Activated naive CD4-positive, alpha-beta T cell treated with anti-CD3 and anti-CD28 coated beads for 36 hours (primary cell): ENCODE measurements at regions of chr5 and their contacts with region 1.

Region 1: GRCh38 chr5:56012281-56012963 is 17.7 kb upstream of the IL6ST start:
- DNase-seq: peak; percentile 66
- H3K4me3 Mint-ChIP-seq: peak overlapping the region; percentile 33
- H3K27ac Mint-ChIP-seq: peak overlapping the region; percentile 77
- H3K4me1 Mint-ChIP-seq: peaks cover 41% of the 10 kb centered on the region
- H3K27me3 Mint-ChIP-seq: no peaks in the 10 kb centered on the region

Region 2: GRCh38 chr5:56050551-56051255 is 38.3 kb after region 1 on chr5:
- CTCF ChIA-PET with region 1: no interaction called
- intact Hi-C with region 1: loop called (anchors 2 kb)
- DNase-seq: no peak
- H3K4me3 Mint-ChIP-seq: peak overlapping the region; percentile 10
- H3K27ac Mint-ChIP-seq: peak overlapping the region; percentile 52
- H3K4me1 Mint-ChIP-seq: peaks cover 61% of the 10 kb centered on the region
- H3K27me3 Mint-ChIP-seq: no peaks in the 10 kb centered on the region

Region 3: DNA sequence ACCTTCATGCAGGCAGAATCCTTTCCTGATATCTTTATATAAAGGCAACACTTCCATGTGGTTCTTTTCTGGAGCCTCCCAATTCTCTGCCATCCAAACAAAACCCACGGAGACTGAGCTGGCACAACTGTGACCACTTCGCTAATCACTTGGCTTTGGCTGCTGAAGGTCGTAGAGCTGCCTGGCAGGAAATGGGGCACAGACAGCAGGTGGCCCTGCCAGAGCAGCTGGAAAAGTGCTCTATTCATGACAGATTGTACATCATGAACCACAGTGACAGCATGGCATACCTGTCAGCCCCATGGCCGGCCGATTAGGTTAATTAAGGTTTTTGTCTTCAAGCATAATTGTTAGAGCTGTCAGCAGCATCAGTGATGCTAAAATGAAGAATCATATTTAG is 362.6 kb after region 1 on chr5:
- CTCF ChIA-PET with region 1: no interaction called
- intact Hi-C with region 1: no loop called
- DNase-seq: no peak
- H3K4me3 Mint-ChIP-seq: no peak overlapping the region
- H3K27ac Mint-ChIP-seq: no peak overlapping the region
- H3K4me1 Mint-ChIP-seq: no peaks in the 10 kb centered on the region
- H3K27me3 Mint-ChIP-seq: no peaks in the 10 kb centered on the region